ENCODE measurements at regions of chr6 and their contacts with region 1.

Region 1: GRCh38 chr6:166394036-166394892 is 11.5 kb upstream of the MPC1 start:
- DNase-seq: no peak
- ATAC-seq: no peak
- H3K4me3 ChIP-seq: no peak overlapping the region
- H3K27ac ChIP-seq: no peak overlapping the region
- H3K4me1 ChIP-seq: no peaks in the 10 kb centered on the region
- H3K27me3 ChIP-seq: no peaks in the 10 kb centered on the region
- CTCF ChIP-seq: no peak

Region 2: GRCh38 chr6:166275714-166276166 is 118.5 kb before region 1 on chr6:
- intact Hi-C with region 1: loop called (anchors 10 kb)
- DNase-seq: peak; percentile 86
- ATAC-seq: peak; percentile 96
- H3K4me3 ChIP-seq: no peak overlapping the region
- H3K27ac ChIP-seq: no peak overlapping the region
- H3K4me1 ChIP-seq: peaks cover 6% of the 10 kb centered on the region
- H3K27me3 ChIP-seq: peaks cover 10% of the 10 kb centered on the region
- CTCF ChIP-seq: peak; percentile 99

Region 3: GRCh38 chr6:166499350-166500163 is 105.3 kb after region 1 on chr6:
- intact Hi-C with region 1: no loop called
- DNase-seq: no peak
- ATAC-seq: no peak
- H3K4me3 ChIP-seq: no peak overlapping the region
- H3K27ac ChIP-seq: no peak overlapping the region
- H3K4me1 ChIP-seq: no peaks in the 10 kb centered on the region
- H3K27me3 ChIP-seq: no peaks in the 10 kb centered on the region
- CTCF ChIP-seq: no peak